HCT116 (cell line): ENCODE measurements at regions of chr1 and their contacts with region 1.

Region 1: GRCh38 chr1:183185941-183186490 is at the start of gene LAMC2:
- DNase-seq: peak; percentile 95
- ATAC-seq: peak; percentile 96
- H3K4me3 ChIP-seq: peak within 1 kb of the TSS; percentile 70 to 72
- H3K27ac ChIP-seq: peak within 1 kb of the TSS; percentile 68
- H3K4me1 ChIP-seq: peaks cover 9 to 39% of the 10 kb centered on the region in 2 experiments
- H3K27me3 ChIP-seq: no peaks in the 10 kb centered on the region
- CTCF ChIP-seq: peak; percentile 33 to 61 (median 58); a peak in 4 of 6 replicates
- POLR2A ChIP-seq: peak; percentile 55
- RAD21 ChIP-seq: peak; percentile 82
- total RNA-seq, gene LAMC2: 22.2 TPM

Region 2: DNA sequence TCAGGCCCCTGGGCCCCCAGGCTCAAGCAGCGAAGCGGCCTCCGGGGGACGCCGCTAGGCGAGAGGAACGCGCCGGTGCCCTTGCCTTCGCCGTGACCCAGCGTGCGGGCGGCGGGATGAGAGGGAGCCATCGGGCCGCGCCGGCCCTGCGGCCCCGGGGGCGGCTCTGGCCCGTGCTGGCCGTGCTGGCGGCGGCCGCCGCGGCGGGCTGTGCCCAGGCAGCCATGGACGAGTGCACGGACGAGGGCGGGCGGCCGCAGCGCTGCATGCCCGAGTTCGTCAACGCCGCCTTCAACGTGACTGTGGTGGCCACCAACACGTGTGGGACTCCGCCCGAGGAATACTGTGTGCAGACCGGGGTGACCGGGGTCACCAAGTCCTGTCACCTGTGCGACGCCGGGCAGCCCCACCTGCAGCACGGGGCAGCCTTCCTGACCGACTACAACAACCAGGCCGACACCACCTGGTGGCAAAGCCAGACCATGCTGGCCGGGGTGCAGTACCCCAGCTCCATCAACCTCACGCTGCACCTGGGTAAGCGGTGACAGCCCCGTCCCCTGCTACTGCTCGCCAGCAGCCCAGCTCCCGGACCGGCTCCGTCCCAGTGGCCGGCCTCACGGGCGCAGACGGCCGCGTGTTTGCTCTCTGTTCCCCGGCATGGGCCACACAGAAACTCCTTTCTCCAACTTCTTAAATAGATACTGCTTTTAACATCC is 162.3 kb before region 1 on chr1:
- CTCF ChIA-PET with region 1: no interaction called
- POLR2A ChIA-PET with region 1: no interaction called
- RAD21 ChIA-PET with region 1: no interaction called
- intact Hi-C with region 1: loop called (anchors 5 kb)
- DNase-seq: peak; percentile 61
- ATAC-seq: peak; percentile 77
- H3K4me3 ChIP-seq: peak overlapping the region; percentile 62 to 76
- H3K27ac ChIP-seq: peak overlapping the region; percentile 99
- H3K4me1 ChIP-seq: peaks cover 35 to 67% of the 10 kb centered on the region in 2 experiments
- H3K27me3 ChIP-seq: no peaks in the 10 kb centered on the region
- CTCF ChIP-seq: peak; percentile 29 to 70 (median 56); a peak in 5 of 6 replicates
- POLR2A ChIP-seq: no peak
- RAD21 ChIP-seq: peak; percentile 57

Region 3: GRCh38 chr1:183783767-183784637 is 598.0 kb after region 1 on chr1:
- CTCF ChIA-PET with region 1: no interaction called
- POLR2A ChIA-PET with region 1: no interaction called
- RAD21 ChIA-PET with region 1: no interaction called
- intact Hi-C with region 1: no loop called
- DNase-seq: no peak
- ATAC-seq: no peak
- H3K4me3 ChIP-seq: no peak overlapping the region
- H3K27ac ChIP-seq: no peak overlapping the region
- H3K4me1 ChIP-seq: no peaks in the 10 kb centered on the region
- H3K27me3 ChIP-seq: no peaks in the 10 kb centered on the region
- CTCF ChIP-seq: no peak
- POLR2A ChIP-seq: no peak
- RAD21 ChIP-seq: no peak